A673 (cell line): ENCODE measurements at regions of chr1 and their contacts with region 1.

Region 1: GRCh38 chr1:50368179-50369012 is 54.8 kb downstream of the DMRTA2 start:
- DNase-seq: peak; percentile 63
- H3K4me3 ChIP-seq: no peak overlapping the region
- H3K27ac ChIP-seq: no peak overlapping the region
- H3K4me1 ChIP-seq: no peaks in the 10 kb centered on the region
- H3K27me3 ChIP-seq: peaks cover 10% of the 10 kb centered on the region
- CTCF ChIP-seq: peak; percentile 87

Region 2: GRCh38 chr1:50348449-50349241 is 19.8 kb before region 1 on chr1:
- CTCF ChIA-PET with region 1: interaction called, 11 read pairs
- POLR2A ChIA-PET with region 1: no interaction called
- intact Hi-C with region 1: no loop called
- DNase-seq: peak; percentile 83
- H3K4me3 ChIP-seq: no peak overlapping the region
- H3K27ac ChIP-seq: no peak overlapping the region
- H3K4me1 ChIP-seq: no peaks in the 10 kb centered on the region
- H3K27me3 ChIP-seq: no peaks in the 10 kb centered on the region
- CTCF ChIP-seq: peak; percentile 86

Region 3: DNA sequence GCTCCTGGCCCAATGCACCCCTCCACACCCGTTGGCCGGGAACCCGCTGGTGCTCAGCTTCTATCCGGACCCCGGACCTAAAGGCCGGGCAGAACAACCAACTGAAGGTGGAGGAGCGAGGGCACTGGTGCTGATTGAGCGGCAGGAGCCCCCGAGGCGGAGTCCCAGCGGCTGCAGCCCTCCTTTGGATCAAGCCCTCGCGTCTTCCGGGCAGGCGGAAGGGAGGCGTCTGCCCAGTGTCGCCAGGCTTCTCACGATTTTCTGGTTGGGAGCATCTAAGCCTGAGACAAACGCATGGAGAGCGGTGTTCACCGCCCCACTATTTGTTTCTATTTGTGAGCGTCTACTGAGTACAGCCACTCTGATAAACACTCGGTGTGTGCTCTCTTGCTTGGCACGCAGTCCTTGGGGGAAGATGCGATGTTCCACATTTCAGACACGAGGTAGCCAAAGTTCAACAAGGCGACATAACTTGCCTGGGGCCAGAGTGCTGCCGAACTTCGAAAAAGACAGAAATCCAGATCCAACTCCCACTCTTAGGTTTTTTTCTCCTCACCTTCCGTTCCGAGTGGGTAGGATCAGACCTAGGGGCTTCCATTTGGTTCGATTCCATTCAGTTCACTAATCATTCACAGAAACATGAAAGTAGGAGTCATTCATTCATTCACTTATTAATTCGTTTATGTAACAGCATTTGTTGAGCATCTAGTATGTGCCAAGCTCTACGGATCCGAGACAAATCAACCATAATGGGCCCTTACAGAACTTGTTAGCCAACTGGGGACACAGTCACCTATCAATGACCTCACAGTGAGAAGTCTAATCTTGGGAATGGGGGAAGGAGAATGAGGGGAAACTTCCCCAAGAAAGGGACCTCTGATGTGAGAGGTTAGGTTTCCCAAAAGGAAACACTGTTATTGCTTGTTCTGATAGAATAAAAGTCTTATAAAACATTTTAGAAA is 59.7 kb after region 1 on chr1:
- CTCF ChIA-PET with region 1: no interaction called
- POLR2A ChIA-PET with region 1: no interaction called
- intact Hi-C with region 1: no loop called
- DNase-seq: no peak
- H3K4me3 ChIP-seq: peak overlapping the region; percentile 29
- H3K27ac ChIP-seq: no peak overlapping the region
- H3K4me1 ChIP-seq: peaks cover 13% of the 10 kb centered on the region
- H3K27me3 ChIP-seq: peaks cover 94% of the 10 kb centered on the region
- CTCF ChIP-seq: no peak

Region 4: GRCh38 chr1:50474859-50475809 is 106.7 kb after region 1 on chr1:
- CTCF ChIA-PET with region 1: no interaction called
- POLR2A ChIA-PET with region 1: no interaction called
- intact Hi-C with region 1: no loop called
- DNase-seq: no peak
- H3K4me3 ChIP-seq: no peak overlapping the region
- H3K27ac ChIP-seq: no peak overlapping the region
- H3K4me1 ChIP-seq: no peaks in the 10 kb centered on the region
- H3K27me3 ChIP-seq: no peaks in the 10 kb centered on the region
- CTCF ChIP-seq: no peak

Region 5: GRCh38 chr1:50605186-50605875 is 236.9 kb after region 1 on chr1:
- CTCF ChIA-PET with region 1: interaction called, 7 read pairs
- POLR2A ChIA-PET with region 1: no interaction called
- intact Hi-C with region 1: loop called (anchors 1 kb)
- DNase-seq: peak; percentile 71
- H3K4me3 ChIP-seq: no peak overlapping the region
- H3K27ac ChIP-seq: no peak overlapping the region
- H3K4me1 ChIP-seq: peaks cover 10% of the 10 kb centered on the region
- H3K27me3 ChIP-seq: no peaks in the 10 kb centered on the region
- CTCF ChIP-seq: peak; percentile 66

Region 6: GRCh38 chr1:50704126-50704525 is 335.7 kb after region 1 on chr1:
- CTCF ChIA-PET with region 1: interaction called, 5 read pairs
- POLR2A ChIA-PET with region 1: no interaction called
- intact Hi-C with region 1: loop called (anchors 1 kb)
- DNase-seq: peak; percentile 63
- H3K4me3 ChIP-seq: no peak overlapping the region
- H3K27ac ChIP-seq: no peak overlapping the region
- H3K4me1 ChIP-seq: peaks cover 19% of the 10 kb centered on the region
- H3K27me3 ChIP-seq: no peaks in the 10 kb centered on the region
- CTCF ChIP-seq: peak; percentile 87

Region 7: GRCh38 chr1:50735443-50735842 is 367.0 kb after region 1 on chr1:
- CTCF ChIA-PET with region 1: no interaction called
- POLR2A ChIA-PET with region 1: no interaction called
- intact Hi-C with region 1: loop called (anchors 2 kb)
- DNase-seq: peak; percentile 55
- H3K4me3 ChIP-seq: no peak overlapping the region
- H3K27ac ChIP-seq: no peak overlapping the region
- H3K4me1 ChIP-seq: no peaks in the 10 kb centered on the region
- H3K27me3 ChIP-seq: no peaks in the 10 kb centered on the region
- CTCF ChIP-seq: peak; percentile 73

Region 8: DNA sequence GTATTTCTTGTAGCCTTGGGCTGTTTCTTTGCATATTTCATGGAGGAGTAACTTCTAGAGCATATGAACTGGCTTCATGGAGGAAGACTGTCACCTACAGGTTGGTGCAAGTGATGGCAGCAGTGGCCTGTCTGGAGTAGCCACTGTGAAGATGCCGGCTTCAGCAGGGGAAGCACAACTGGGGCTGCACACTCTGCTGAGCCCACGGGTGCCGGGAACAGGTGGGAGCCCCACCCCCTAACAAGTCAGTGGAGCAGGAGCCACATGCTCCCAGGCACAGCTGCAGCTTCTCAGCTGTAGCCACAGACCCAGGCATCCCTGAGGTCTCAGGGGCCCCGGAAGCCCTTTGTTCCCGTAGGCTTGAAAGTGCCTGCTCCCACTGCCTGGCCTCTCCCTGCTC is 690.5 kb after region 1 on chr1:
- CTCF ChIA-PET with region 1: no interaction called
- POLR2A ChIA-PET with region 1: no interaction called
- intact Hi-C with region 1: loop called (anchors 5 kb)
- DNase-seq: peak; percentile 37
- H3K4me3 ChIP-seq: no peak overlapping the region
- H3K27ac ChIP-seq: no peak overlapping the region
- H3K4me1 ChIP-seq: no peaks in the 10 kb centered on the region
- H3K27me3 ChIP-seq: no peaks in the 10 kb centered on the region
- CTCF ChIP-seq: peak; percentile 53